ENCODE measurements at regions of chr6 and their contacts with region 1.

Region 1: GRCh38 chr6:3592371-3592941 is 135.6 kb upstream of the SLC22A23 start:
- DNase-seq: peak; percentile 38 to 96
- H3K4me3 ChIP-seq: no peak overlapping the region
- H3K27ac ChIP-seq: peak overlapping the region; percentile 95
- H3K4me1 ChIP-seq: peaks cover 18% of the 10 kb centered on the region
- H3K27me3 ChIP-seq: no peaks in the 10 kb centered on the region
- CTCF ChIP-seq: no peak

Region 2: DNA sequence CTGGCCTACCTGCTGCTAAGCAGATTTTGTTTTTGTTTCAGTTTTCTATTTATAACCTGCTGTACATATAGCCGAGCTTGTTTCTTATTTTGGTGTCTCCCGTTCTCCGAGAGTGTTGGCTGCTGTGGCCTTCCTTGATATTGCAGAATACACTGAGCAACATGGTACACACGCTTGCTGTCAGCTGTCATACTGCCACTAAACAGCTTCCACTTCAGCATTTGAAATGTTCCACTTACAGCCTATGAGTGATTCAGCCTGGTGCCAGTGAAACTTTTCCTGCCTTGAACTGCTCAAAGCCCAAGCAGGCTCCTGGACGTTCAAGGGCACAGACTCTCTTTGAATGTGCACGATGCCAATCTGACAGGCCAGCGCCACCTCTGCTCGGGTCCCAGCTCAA is 246.6 kb before region 1 on chr6:
- CTCF ChIA-PET with region 1: interaction called, 12 read pairs
- POLR2A ChIA-PET with region 1: no interaction called
- intact Hi-C with region 1: no loop called
- DNase-seq: no peak
- H3K4me3 ChIP-seq: no peak overlapping the region
- H3K27ac ChIP-seq: no peak overlapping the region
- H3K4me1 ChIP-seq: peaks cover 7% of the 10 kb centered on the region
- H3K27me3 ChIP-seq: no peaks in the 10 kb centered on the region
- CTCF ChIP-seq: no peak

Region 3: DNA sequence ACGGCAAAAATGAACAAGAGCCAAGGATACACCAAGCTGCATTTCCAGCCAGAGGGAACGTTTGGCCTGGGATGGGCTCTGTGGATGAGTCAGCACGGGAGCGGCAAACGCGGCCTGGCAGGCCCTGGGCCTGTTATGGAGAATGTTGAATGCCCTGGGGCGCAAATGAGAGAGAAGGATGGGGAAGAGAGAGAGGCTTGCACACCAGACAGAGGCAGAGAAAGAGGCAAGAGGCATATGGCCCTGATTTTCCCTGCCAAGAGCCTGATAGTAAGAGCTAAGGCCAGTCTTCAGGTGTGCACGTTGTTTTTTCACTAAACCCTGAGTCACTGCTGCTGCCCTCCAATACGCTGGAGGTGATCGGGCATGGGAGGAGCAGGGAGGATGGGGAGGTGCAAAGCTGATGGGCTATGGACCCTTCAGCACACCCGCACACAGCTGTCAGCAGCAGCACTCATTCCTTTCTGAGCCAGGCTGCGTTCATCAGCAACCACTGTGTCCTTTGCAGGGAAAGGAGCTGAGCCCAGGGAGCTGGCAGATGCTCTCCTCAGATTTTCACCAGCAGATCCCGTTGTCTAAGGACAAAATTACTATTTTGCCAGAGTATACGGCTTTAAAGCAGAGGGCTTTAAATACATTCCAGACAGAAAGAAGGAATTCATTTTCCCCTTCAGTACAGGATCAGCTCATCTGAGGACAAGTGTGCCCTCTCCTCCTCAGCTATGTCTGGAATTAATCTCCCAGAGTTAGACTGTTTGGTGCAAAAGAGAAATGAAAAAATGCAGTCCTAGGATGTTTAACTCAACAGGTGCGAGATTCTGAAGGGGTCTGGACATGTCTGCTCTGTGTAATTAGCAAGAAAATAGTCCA is 73.9 kb before region 1 on chr6:
- CTCF ChIA-PET with region 1: no interaction called
- POLR2A ChIA-PET with region 1: no interaction called
- intact Hi-C with region 1: loop called (anchors 2 kb)
- DNase-seq: peak; percentile 85 to 90
- H3K4me3 ChIP-seq: peak overlapping the region; percentile 31; the same call in 1 of the 2 replicates
- H3K27ac ChIP-seq: peak overlapping the region; percentile 71
- H3K4me1 ChIP-seq: peaks cover 52% of the 10 kb centered on the region
- H3K27me3 ChIP-seq: no peaks in the 10 kb centered on the region
- CTCF ChIP-seq: no peak

Region 4: GRCh38 chr6:3612341-3613041 is 20.0 kb after region 1 on chr6:
- CTCF ChIA-PET with region 1: no interaction called
- POLR2A ChIA-PET with region 1: no interaction called
- intact Hi-C with region 1: loop called (anchors 1 kb)
- DNase-seq: peak; percentile 48 to 94
- H3K4me3 ChIP-seq: no peak overlapping the region
- H3K27ac ChIP-seq: peak overlapping the region; percentile 78
- H3K4me1 ChIP-seq: peaks cover 44% of the 10 kb centered on the region
- H3K27me3 ChIP-seq: no peaks in the 10 kb centered on the region
- CTCF ChIP-seq: no peak

Region 5: DNA sequence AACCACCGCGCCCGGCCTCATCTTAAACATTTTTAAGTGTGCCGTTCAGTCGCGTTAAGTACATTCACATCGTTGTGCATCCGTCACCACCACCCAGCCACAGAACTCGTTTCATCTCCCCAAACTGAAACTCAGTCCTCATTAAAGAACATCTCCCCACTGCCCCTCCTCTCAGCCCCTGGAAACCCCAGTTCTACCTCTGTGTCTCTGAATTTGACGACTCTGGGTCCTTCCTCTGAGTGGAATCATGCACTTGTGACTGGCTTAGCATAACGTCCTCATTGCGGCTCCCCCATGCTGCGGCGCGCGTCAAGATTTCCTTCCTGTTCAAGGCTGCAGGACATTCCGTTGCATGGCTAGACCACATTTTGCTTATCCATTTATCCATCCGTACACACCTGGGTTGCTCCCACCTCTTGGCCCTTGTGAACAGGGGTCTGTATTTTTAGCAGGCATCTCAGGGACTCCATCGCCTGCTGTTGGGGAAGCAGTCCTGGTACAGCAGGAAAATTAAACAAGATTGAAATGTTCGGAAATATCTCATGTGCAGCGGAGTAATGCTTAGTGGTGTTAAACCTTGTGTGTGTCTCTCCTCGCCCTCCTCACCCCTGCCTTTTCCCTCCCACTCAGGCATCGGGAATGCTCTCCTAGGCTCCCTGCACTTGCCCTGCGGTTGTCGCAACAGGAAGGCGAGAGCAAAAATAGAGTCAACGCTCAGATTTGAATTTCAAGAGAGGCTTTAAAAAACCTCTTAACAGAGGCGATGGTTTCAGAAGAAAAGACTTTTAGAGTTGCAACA is 31.2 kb after region 1 on chr6:
- CTCF ChIA-PET with region 1: no interaction called
- POLR2A ChIA-PET with region 1: no interaction called
- intact Hi-C with region 1: no loop called
- DNase-seq: no peak
- H3K4me3 ChIP-seq: no peak overlapping the region
- H3K27ac ChIP-seq: no peak overlapping the region
- H3K4me1 ChIP-seq: no peaks in the 10 kb centered on the region
- H3K27me3 ChIP-seq: no peaks in the 10 kb centered on the region
- CTCF ChIP-seq: no peak

Region 6: DNA sequence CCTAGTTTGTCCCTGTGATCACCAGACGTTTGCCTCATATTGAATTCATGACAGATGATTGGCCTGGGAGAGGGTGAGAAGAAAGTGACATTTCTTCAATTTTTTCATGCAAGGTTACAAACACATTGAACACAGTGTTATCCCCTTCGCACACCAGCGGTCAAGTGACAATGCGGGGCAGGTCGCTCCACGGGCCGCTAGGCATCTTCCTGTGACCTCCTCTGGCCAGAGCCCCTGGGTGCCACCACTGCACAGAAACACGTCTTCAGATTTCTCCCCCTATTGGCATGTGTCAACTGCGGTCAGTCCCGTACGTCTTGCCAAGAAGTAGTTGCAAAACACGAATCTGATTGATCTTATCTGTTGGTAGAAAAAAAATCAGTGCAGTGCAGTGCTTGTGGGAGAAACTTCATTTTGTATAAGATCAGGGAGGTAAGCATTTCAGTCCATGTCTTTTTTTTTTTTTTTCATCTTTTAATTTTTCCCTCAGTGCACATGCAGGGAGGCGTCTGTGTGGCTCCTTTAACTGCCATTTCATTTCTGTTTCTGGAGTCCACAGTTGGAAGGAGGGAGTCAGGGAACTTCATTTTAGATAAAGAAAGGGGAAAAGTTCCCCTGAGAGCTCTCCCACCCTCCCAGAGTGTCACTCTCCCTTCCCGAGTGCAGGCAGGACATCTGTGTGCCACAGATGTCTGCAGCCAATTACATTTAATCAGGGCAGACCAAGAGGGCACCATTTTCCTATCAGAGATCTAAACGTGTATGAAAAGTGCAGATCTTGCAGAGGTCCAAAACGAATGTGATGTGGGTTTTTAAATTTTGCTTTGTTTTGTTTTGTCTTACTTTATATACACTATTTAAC is 62.2 kb after region 1 on chr6:
- CTCF ChIA-PET with region 1: no interaction called
- POLR2A ChIA-PET with region 1: no interaction called
- intact Hi-C with region 1: no loop called
- DNase-seq: no peak
- H3K4me3 ChIP-seq: no peak overlapping the region
- H3K27ac ChIP-seq: no peak overlapping the region
- H3K4me1 ChIP-seq: no peaks in the 10 kb centered on the region
- H3K27me3 ChIP-seq: no peaks in the 10 kb centered on the region
- CTCF ChIP-seq: no peak

Measured in PC-9 (cell line).